Body of pancreas (tissue), 4 donors: ENCODE measurements at regions of chr14 and their contacts with region 1.

Region 1: DNA sequence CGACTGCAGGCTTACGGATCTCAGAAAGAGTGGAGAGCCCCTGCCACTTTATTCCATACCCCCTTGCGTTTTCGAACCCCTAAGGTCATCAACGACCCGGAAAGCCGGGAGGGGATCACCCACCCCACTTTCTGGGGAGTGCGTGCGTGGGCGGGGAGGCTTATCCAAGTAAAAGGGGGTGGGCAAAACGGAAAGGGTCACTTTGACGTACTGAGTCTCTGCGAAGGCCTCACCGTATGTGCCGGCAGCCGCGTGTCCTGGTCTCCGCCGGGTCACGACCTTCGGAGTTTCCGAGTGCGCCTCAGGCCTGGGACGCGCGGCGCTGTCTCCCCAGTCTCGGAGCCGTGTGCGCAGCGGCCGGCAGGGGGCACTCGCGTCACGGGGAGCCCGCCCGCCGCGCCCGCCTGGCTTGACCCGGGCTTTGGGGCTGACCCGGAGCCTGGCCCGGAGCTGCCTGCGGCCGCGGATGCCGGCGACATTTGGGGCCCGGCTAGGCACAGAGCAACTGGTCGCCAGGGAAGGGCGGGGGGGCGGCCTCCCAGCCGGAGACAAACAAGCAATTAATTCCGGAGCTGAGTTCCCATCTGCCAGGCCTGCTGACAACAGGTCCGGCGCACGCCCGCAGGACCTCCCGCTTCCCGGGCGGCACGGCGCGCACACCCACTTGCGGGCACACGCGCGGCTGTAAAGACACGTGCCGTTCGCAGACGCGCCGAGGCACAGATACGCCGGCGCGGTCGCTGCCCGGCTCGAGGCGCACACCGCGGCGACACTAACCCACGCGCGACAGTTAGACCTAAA is 890 bp upstream of the KIF26A start:
- DNase-seq: peak; percentile 42 to 73 (median 68)
- ATAC-seq: peak; percentile 82
- H3K4me3 ChIP-seq: peak overlapping the region in 1 of 2 donors; percentile 22
- H3K27ac ChIP-seq: no peak overlapping the region
- H3K4me1 ChIP-seq: peaks cover 47% of the 10 kb centered on the region
- H3K27me3 ChIP-seq: peaks cover 0 to 21% of the 10 kb centered on the region in 2 donors
- CTCF ChIP-seq: peak; percentile 61 to 96 (median 89)
- POLR2A ChIP-seq: no peak

Region 2: DNA sequence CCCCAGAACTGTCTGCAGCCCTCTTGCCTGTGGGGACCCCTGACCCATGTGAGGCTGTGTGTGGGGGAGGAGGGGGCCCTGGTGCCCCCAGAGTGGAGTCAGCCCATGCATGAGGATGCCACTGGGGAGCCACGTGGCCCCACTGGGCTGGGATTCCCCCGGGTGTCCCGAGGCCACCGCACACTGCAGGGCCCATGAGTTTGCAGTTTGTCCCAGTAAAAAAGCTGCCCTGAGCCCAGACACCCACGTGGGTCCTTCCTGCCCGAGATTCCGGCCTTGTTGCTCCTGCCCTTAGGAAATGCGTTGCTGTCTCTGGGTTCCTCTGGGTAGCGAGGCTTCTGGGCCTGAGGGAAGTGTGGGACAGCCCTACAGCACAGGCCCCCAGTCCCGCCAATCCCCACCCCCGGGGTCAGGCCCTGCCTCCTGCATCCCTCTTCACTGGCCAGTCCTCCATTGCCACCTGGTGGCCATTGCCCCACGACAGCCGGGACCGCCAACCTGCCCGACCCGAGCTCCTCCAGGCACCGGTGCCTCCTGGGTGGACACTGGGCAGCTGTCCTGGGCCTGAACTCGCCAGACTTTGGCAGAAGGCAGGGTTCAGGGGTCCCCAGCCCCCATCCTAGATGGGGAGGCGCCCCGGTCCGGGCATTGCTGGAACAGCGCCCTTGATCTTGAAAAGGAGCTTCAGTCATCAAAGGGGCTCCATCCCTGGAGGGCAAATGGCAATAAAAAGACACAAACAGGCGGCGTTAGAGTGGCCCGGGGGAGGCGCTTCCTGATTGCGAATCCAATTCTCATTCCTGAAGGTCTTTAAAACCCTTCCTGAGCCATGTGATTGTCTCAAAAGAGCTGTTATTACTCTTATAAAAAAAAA is 426.5 kb after region 1 on chr14:
- intact Hi-C with region 1: loop called (anchors 5 kb)
- DNase-seq: peak; percentile 73 to 77 (median 76)
- ATAC-seq: peak; percentile 72
- H3K4me3 ChIP-seq: no peak overlapping the region
- H3K27ac ChIP-seq: no peak overlapping the region
- H3K4me1 ChIP-seq: peaks cover 5% of the 10 kb centered on the region
- H3K27me3 ChIP-seq: no peaks in the 10 kb centered on the region
- CTCF ChIP-seq: peak; percentile 76 to 86 (median 81)
- POLR2A ChIP-seq: no peak

Region 3: GRCh38 chr14:104639889-104640548 is 502.5 kb after region 1 on chr14:
- intact Hi-C with region 1: loop called (anchors 5 kb)
- DNase-seq: peak; percentile 56 to 74 (median 69)
- ATAC-seq: peak; percentile 86
- H3K4me3 ChIP-seq: no peak overlapping the region
- H3K27ac ChIP-seq: no peak overlapping the region
- H3K4me1 ChIP-seq: peaks cover 12% of the 10 kb centered on the region
- H3K27me3 ChIP-seq: no peaks in the 10 kb centered on the region
- CTCF ChIP-seq: peak; percentile 77 to 89 (median 81)
- POLR2A ChIP-seq: no peak